Activated CD4-positive, alpha-beta T cell treated with anti-CD3 and anti-CD28 coated beads for 36 hours (primary cell): ENCODE measurements at regions of chr17 and their contacts with region 1.

Region 1: DNA sequence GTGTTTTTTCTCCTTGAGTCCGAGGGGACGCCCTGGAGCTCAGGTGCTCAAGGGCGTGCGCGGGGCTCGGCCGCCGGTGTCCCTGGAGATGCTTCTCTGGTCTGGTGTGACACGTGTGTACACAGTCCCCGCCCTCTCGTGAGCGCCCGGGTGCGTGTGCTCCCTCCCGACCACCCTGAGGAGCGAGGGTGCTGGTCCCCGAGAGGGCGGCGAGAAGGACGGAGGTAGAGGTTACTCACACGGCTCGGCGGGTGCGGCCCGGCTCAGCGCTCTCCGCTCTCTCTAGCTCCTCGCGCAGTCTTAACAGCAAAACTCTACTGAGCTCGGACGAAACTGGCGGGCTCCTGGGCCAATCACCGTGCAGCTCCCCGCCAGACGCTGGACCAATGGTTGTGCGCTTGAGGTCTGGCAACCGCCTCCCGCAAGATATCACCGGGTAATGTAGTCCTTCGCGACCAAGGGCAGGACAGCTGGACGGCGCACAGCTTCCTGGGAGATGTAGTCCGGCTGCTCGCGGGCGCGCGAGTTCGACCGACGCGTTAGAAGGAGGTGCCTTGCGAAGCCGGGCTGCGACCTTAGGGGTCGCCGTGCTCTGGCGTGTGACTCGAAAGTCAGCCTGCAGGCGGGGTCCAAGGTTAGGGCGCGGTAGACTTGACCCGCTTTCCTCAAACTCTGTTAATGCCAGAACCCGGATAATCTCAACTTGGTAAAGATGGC is at the start of gene SLC25A19:
- DNase-seq: peak; percentile 99
- ATAC-seq: peak; percentile 95
- H3K4me3 Mint-ChIP-seq: peak within 1 kb of the TSS; percentile 86
- H3K27ac Mint-ChIP-seq: peak within 1 kb of the TSS; percentile 100
- H3K4me1 Mint-ChIP-seq: peaks cover 28% of the 10 kb centered on the region
- H3K27me3 Mint-ChIP-seq: no peaks in the 10 kb centered on the region
- total RNA-seq, gene SLC25A19: 67.8 to 79.7 TPM

Region 2: GRCh38 chr17:75205037-75205792 is 84.1 kb before region 1 on chr17 and contains the start of gene NUP85:
- CTCF ChIA-PET with region 1: interaction called, 3 read pairs
- POLR2A ChIA-PET with region 1: interaction called, 5 read pairs
- intact Hi-C with region 1: loop called in 1 of 2 experiments (anchors 1 kb)
- DNase-seq: peak; percentile 96
- ATAC-seq: peak; percentile 86
- H3K4me3 Mint-ChIP-seq: peak within 1 kb of the TSS; percentile 91
- H3K27ac Mint-ChIP-seq: peak within 1 kb of the TSS; percentile 100
- H3K4me1 Mint-ChIP-seq: peaks cover 18% of the 10 kb centered on the region
- H3K27me3 Mint-ChIP-seq: no peaks in the 10 kb centered on the region
- total RNA-seq, gene NUP85: 130 to 160 TPM

Region 3: GRCh38 chr17:75271233-75271954 is 17.9 kb before region 1 on chr17:
- CTCF ChIA-PET with region 1: interaction called, 37 read pairs
- POLR2A ChIA-PET with region 1: interaction called, 27 read pairs
- intact Hi-C with region 1: loop called (anchors 1 kb)
- DNase-seq: peak; percentile 93
- ATAC-seq: peak; percentile 79
- H3K4me3 Mint-ChIP-seq: peak overlapping the region; percentile 80
- H3K27ac Mint-ChIP-seq: peak overlapping the region; percentile 81
- H3K4me1 Mint-ChIP-seq: peaks cover 21% of the 10 kb centered on the region
- H3K27me3 Mint-ChIP-seq: no peaks in the 10 kb centered on the region

Region 4: DNA sequence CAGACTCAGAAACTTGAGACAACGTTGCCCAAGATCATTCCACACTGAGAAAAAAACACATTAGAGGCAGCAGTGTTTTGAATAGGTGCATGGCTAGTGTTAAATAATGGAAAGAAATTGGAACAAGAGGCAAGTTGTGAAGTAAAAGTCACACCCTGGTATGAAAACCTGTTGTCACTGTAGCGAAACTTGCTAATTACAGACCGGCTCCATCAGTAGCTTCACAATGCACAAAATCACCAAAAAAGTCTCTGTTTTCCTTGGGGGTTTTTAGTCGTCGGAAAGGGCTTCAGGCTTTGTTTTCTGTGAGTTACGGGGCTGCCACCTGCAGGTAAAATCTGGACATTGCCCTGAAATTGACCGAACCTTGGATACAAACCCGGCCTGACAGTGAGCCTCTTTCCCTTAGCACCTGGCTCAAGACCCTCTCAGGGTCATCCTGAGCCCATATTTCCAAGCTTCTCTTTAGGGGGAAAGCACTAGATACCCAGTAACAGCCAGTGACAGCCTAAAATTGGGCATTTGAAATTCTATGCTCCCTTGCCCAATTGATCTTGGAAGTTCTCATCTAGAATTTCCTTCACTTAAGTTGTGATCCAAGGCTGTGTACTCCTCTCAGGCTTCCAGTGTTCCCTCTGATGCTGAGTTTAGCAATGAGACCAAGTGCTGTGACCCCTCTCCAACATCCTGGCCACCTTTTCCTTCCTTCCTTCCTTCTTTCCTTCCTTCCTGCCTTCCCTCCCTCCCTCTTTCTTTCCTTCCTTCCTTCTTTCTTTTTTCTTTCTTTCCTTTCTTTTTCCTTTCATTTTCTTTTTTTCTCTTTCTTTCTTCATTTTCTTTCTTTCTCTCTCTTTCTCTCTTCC is 123.4 kb after region 1 on chr17:
- CTCF ChIA-PET with region 1: interaction called, 24 read pairs
- POLR2A ChIA-PET with region 1: no interaction called
- intact Hi-C with region 1: loop called (anchors 1 kb)
- DNase-seq: peak; percentile 84
- ATAC-seq: peak; percentile 85
- H3K4me3 Mint-ChIP-seq: peak overlapping the region; percentile 44
- H3K27ac Mint-ChIP-seq: peak overlapping the region; percentile 3
- H3K4me1 Mint-ChIP-seq: peaks cover 15% of the 10 kb centered on the region
- H3K27me3 Mint-ChIP-seq: no peaks in the 10 kb centered on the region

Region 5: GRCh38 chr17:75476271-75476671 is 187.0 kb after region 1 on chr17:
- CTCF ChIA-PET with region 1: no interaction called
- POLR2A ChIA-PET with region 1: no interaction called
- intact Hi-C with region 1: no loop called
- DNase-seq: no peak
- ATAC-seq: no peak
- H3K4me3 Mint-ChIP-seq: no peak overlapping the region
- H3K27ac Mint-ChIP-seq: no peak overlapping the region
- H3K4me1 Mint-ChIP-seq: no peaks in the 10 kb centered on the region
- H3K27me3 Mint-ChIP-seq: no peaks in the 10 kb centered on the region

Region 6: DNA sequence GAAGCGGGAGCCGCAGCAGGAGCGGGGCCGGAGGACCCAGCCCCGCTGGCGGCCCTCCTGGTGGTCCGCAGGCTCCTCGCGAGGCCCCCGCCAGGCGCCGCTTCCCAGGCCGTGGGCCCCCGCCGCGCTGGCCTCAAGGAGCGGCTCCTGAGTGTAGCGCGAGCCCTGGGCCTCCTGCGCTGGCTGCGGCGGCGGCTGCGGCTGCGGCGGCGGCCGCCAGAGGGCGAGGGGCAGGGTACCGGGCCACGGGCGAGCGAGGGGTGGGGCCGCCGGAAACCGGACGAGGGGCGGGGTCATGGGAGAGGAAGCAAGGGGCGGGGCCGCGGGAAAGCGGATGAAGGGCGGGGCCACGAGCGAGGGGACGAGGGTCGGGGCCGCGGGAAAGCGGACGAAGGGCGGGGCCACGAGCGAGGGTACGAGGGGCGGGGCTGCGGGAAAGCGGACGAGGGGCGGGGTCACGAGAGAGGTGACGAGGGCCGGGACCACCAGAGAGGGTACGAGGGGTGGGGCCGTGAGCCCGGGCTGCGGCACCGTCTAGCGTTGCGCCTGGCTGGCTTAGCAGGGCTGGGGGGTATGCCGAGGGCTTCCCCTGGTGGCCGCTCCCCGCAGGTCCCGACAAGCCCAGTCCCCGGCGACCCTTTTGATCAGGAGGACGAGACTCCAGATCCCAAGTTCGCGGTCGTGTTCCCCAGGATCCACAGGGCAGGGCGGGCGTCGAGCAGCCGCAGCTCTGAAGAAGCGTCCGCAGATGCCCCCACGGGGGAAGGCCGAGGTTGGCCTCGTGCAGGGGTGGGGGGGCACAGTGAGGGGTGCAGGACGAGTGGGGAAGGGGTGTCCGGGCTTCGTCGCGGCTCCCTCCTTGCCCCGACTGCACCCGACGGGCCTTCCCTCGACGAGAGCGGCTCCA is 300.0 kb after region 1 on chr17:
- CTCF ChIA-PET with region 1: no interaction called
- POLR2A ChIA-PET with region 1: no interaction called
- intact Hi-C with region 1: loop called in 1 of 2 experiments (anchors 1 kb)
- DNase-seq: peak; percentile 99
- ATAC-seq: peak; percentile 90
- H3K4me3 Mint-ChIP-seq: peak overlapping the region; percentile 72
- H3K27ac Mint-ChIP-seq: peak overlapping the region; percentile 42
- H3K4me1 Mint-ChIP-seq: no peaks in the 10 kb centered on the region
- H3K27me3 Mint-ChIP-seq: peaks cover 2% of the 10 kb centered on the region